Mammary epithelial cell (primary cell): ENCODE measurements at regions of chr2 and their contacts with region 1.

Region 1: GRCh38 chr2:189142893-189143759 is 36.4 kb downstream of the COL5A2 start:
- DNase-seq: peak; percentile 52
- H3K4me3 ChIP-seq: no peak overlapping the region
- H3K27ac ChIP-seq: no peak overlapping the region
- H3K4me1 ChIP-seq: no peaks in the 10 kb centered on the region
- H3K27me3 ChIP-seq: no peaks in the 10 kb centered on the region
- CTCF ChIP-seq: peak; percentile 96 to 98

Region 2: DNA sequence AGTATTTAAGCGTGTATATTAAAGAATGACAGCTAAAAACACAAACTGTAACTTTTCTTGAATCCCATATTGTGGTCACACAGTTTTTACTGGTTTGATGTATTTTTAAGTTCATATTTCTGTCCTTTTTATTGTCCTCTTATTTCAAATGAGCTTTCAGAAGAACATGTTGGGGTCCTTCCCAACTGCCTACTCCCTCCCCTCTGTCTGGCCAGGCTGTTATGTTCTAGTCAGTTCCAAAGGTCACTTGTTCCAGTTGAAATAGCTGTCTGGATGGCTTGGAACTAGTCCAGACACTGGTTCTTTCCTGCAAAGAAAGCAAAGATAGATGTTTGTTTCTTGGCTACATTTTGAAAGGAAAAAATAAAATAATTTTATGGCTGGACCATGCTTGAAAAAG is 544.6 kb before region 1 on chr2:
- CTCF ChIA-PET with region 1: no interaction called
- dilution Hi-C with region 1: no loop called
- in situ Hi-C with region 1: no loop called
- intact Hi-C with region 1: no loop called
- DNase-seq: no peak
- H3K4me3 ChIP-seq: no peak overlapping the region
- H3K27ac ChIP-seq: no peak overlapping the region
- H3K4me1 ChIP-seq: no peaks in the 10 kb centered on the region
- H3K27me3 ChIP-seq: no peaks in the 10 kb centered on the region
- CTCF ChIP-seq: no peak

Region 3: GRCh38 chr2:189096769-189097447 is 46.2 kb before region 1 on chr2:
- CTCF ChIA-PET with region 1: no interaction called
- dilution Hi-C with region 1: no loop called
- in situ Hi-C with region 1: no loop called
- intact Hi-C with region 1: loop called (anchors 1 kb)
- DNase-seq: peak; percentile 60
- H3K4me3 ChIP-seq: no peak overlapping the region
- H3K27ac ChIP-seq: no peak overlapping the region
- H3K4me1 ChIP-seq: peaks cover 6% of the 10 kb centered on the region
- H3K27me3 ChIP-seq: no peaks in the 10 kb centered on the region
- CTCF ChIP-seq: no peak